ENCODE measurements at regions of chr9 and their contacts with region 1.

Region 1: GRCh38 chr9:125650271-125650737 is 56.7 kb downstream of the MAPKAP1 start:
- DNase-seq: peak; percentile 42
- H3K4me3 Mint-ChIP-seq: peak overlapping the region; percentile 14
- H3K27ac Mint-ChIP-seq: peak overlapping the region; percentile 62
- H3K4me1 Mint-ChIP-seq: peaks cover 66% of the 10 kb centered on the region
- H3K27me3 Mint-ChIP-seq: no peaks in the 10 kb centered on the region

Region 2: DNA sequence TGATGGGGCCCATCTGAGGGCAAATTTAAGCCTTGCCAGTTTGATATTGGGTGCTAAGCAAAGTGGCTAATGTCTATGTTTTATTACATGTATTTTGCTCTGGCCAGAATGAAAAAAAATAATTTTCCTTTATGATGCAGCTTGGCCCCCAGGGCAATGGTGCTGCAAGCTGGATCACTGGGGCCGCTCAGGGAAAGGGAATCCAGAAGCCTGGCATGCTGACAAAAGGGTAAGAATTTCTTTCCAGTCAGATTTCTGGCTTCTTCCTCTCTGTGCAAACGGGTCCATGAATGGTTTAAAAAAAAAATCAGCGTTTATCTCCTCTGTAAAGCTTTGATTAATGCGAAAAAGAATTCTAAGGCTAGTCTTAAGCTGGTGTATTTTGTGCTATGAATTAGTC is 81.7 kb before region 1 on chr9:
- CTCF ChIA-PET with region 1: no interaction called
- POLR2A ChIA-PET with region 1: no interaction called
- intact Hi-C with region 1: no loop called
- DNase-seq: no peak
- H3K4me3 Mint-ChIP-seq: no peak overlapping the region
- H3K27ac Mint-ChIP-seq: no peak overlapping the region
- H3K4me1 Mint-ChIP-seq: peaks cover 4% of the 10 kb centered on the region
- H3K27me3 Mint-ChIP-seq: no peaks in the 10 kb centered on the region

Region 3: DNA sequence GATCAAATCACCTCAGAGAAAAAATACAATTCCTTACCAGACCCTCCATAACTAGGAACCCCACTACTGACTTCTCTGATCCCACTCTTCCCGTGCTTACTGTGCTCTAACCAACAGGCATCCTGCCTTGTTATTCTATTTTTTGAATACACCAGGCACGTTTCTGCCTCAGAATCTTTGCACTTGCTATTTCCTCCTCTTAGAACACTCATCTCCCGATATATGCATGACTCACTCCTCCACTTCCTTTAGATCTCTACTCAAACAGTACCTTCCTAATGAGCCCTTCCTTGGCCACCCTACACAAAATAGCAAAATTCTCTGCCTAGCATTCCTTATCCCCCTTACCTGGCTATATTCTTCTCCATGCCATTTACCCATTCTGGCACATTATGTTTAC is 12.8 kb after region 1 on chr9:
- CTCF ChIA-PET with region 1: interaction called, 3 read pairs
- POLR2A ChIA-PET with region 1: interaction called, 6 read pairs
- intact Hi-C with region 1: loop called (anchors 1 kb)
- DNase-seq: no peak
- H3K4me3 Mint-ChIP-seq: no peak overlapping the region
- H3K27ac Mint-ChIP-seq: no peak overlapping the region
- H3K4me1 Mint-ChIP-seq: peaks cover 12% of the 10 kb centered on the region
- H3K27me3 Mint-ChIP-seq: no peaks in the 10 kb centered on the region

Region 4: DNA sequence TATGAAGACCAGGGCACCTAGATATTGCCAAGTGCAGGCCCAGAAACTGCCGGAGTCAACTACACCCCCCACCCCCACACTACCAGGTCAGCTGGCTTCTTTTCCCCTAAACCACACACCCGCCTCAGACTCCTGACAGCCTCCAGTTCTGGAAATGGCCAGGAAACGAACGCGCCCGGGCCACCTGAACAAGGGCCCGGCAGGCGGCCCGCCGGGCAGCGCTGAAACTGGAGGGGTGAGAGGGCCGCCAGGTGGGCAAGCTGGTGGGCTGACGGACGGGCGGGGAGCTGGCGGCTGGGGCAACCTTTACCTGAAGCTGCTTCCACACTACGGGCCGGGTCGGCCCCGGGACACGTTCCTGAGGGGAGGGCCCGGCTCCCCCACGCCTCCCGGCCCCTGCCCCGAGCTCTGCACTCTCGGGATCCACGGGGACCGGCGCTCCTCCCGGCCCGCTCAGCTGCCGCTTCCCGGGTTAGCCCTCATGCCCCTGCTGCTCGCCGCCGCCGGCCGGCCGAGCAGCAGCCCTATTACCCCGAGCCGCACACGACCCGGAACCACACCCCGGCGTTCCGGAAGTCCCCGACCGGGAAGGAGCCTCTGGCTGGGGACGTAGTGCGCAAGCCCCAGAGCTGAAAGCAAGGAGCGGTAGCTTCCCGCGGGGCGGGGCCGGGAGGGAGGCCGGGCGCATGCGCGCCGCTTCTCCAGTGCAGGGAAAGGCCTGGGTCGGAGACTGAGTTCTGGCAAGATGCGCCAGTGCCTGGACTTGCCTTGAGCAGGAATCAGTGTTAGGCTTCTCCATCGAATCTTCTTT is 56.6 kb after region 1 on chr9 and contains the start of gene MAPKAP1:
- CTCF ChIA-PET with region 1: interaction called, 5 read pairs
- POLR2A ChIA-PET with region 1: interaction called, 5 read pairs
- intact Hi-C with region 1: loop called (anchors 2 kb)
- DNase-seq: peak; percentile 97
- H3K4me3 Mint-ChIP-seq: peak within 1 kb of the TSS; percentile 77
- H3K27ac Mint-ChIP-seq: peak within 1 kb of the TSS; percentile 77
- H3K4me1 Mint-ChIP-seq: peaks cover 37% of the 10 kb centered on the region
- H3K27me3 Mint-ChIP-seq: no peaks in the 10 kb centered on the region
- total RNA-seq, gene MAPKAP1: 55.3 to 57.9 TPM